ENCODE measurements at regions of chr1 and their contacts with region 1.

Region 1: DNA sequence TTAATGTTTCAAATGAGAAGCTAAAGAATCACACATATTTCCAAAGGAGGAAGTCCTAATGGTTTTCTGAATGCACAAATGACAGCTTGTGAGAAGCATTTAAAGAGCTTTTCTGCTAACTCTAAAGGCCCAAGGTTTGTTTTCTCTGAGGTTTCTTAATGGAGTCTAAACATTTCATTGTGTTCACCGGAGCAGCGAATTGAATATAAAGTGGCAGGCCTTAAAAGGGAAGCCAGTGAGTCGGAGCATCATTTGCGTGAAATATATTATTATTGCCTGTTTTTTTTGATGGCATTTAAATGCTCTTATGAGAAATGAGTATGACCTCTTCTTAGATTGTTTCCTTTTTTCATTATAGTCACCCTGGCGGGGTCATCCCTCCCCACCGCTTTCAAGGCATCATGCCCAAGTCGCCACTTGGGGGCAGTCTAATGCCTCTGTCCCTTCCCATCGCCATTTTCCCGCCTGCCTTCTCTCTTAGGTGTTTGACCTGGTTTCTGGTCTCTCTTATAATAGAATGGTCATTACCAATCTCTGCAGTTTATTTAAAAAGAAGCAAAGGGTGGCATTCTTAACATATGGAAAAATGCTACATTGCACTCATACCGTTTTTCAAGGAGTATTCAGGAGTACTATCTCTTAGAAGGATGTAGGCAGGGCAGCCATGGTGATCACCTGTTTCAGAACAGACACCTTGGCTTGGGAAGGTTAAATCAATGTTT is 25.3 kb upstream of the OVAAL start:
- DNase-seq: peak; percentile 86
- ATAC-seq: peak; percentile 81
- H3K4me3 Mint-ChIP-seq: no peak overlapping the region
- H3K27ac Mint-ChIP-seq: no peak overlapping the region
- H3K4me1 Mint-ChIP-seq: no peaks in the 10 kb centered on the region
- H3K27me3 Mint-ChIP-seq: peaks cover 4% of the 10 kb centered on the region

Region 2: DNA sequence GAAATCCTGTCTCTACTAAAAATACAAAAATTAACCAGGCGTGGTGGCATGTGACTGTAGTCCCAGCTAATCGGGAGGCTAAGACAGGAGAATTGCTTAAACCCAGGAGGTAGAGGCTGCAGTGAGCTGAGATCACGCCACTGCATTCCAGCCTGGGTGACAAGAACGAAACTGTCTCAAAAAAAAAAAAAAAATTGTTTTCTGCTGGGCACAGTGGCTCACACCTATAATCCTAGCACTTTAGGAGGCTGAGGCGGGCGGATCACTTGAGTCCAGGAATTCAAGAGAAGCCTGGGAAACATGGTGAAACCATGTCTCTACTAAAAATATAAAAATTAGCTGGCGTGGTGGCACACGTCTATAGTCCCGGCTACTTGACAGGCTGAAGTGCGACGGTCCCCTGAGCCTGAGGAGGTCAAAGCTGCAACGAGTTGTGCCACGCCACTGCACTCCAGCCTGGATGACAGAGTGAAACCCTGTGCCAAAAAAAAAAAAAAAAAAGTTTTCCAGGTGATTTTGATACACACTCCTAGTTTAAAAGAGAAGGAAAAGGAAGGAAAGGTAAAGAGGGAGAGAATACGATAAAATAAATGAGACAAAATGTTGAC is 1335.6 kb before region 1 on chr1:
- CTCF ChIA-PET with region 1: no interaction called
- POLR2A ChIA-PET with region 1: no interaction called
- intact Hi-C with region 1: no loop called
- DNase-seq: no peak
- ATAC-seq: no peak
- H3K4me3 Mint-ChIP-seq: no peak overlapping the region
- H3K27ac Mint-ChIP-seq: no peak overlapping the region
- H3K4me1 Mint-ChIP-seq: peaks cover 12% of the 10 kb centered on the region
- H3K27me3 Mint-ChIP-seq: no peaks in the 10 kb centered on the region

Region 3: GRCh38 chr1:180397175-180397574 is 136.3 kb before region 1 on chr1:
- CTCF ChIA-PET with region 1: no interaction called
- POLR2A ChIA-PET with region 1: no interaction called
- intact Hi-C with region 1: no loop called
- DNase-seq: no peak
- ATAC-seq: no peak
- H3K4me3 Mint-ChIP-seq: no peak overlapping the region
- H3K27ac Mint-ChIP-seq: no peak overlapping the region
- H3K4me1 Mint-ChIP-seq: no peaks in the 10 kb centered on the region
- H3K27me3 Mint-ChIP-seq: no peaks in the 10 kb centered on the region

Region 4: GRCh38 chr1:180515864-180516388 is 17.5 kb before region 1 on chr1:
- CTCF ChIA-PET with region 1: interaction called, 37 read pairs
- POLR2A ChIA-PET with region 1: no interaction called
- intact Hi-C with region 1: no loop called
- DNase-seq: peak; percentile 76
- ATAC-seq: peak; percentile 100
- H3K4me3 Mint-ChIP-seq: no peak overlapping the region
- H3K27ac Mint-ChIP-seq: no peak overlapping the region
- H3K4me1 Mint-ChIP-seq: no peaks in the 10 kb centered on the region
- H3K27me3 Mint-ChIP-seq: peaks cover 4% of the 10 kb centered on the region

Region 5: GRCh38 chr1:180778782-180779398 is 245.5 kb after region 1 on chr1:
- CTCF ChIA-PET with region 1: interaction called, 3 read pairs
- POLR2A ChIA-PET with region 1: no interaction called
- intact Hi-C with region 1: loop called in 1 of 2 experiments (anchors 5 kb)
- DNase-seq: peak; percentile 18
- ATAC-seq: no peak
- H3K4me3 Mint-ChIP-seq: no peak overlapping the region
- H3K27ac Mint-ChIP-seq: no peak overlapping the region
- H3K4me1 Mint-ChIP-seq: peaks cover 2% of the 10 kb centered on the region
- H3K27me3 Mint-ChIP-seq: no peaks in the 10 kb centered on the region